Activated B cell treated with CpG ODN at 0.5 μM for 24 hours (primary cell): ENCODE measurements at regions of chr14 and their contacts with region 1.

Region 1: GRCh38 chr14:95196290-95196689 is 39.0 kb upstream of the DICER1 start:
- DNase-seq: no peak
- ATAC-seq: peak; percentile 56
- H3K4me3 Mint-ChIP-seq: no peak overlapping the region
- H3K27ac Mint-ChIP-seq: no peak overlapping the region
- H3K4me1 Mint-ChIP-seq: peaks cover 4% of the 10 kb centered on the region
- H3K27me3 Mint-ChIP-seq: no peaks in the 10 kb centered on the region
- CTCF ChIP-seq: no peak

Region 2: GRCh38 chr14:94689218-94689984 is 506.9 kb before region 1 on chr14:
- CTCF ChIA-PET with region 1: no interaction called
- POLR2A ChIA-PET with region 1: no interaction called
- intact Hi-C with region 1: loop called (anchors 5 kb)
- DNase-seq: peak; percentile 35
- ATAC-seq: peak; percentile 49
- H3K4me3 Mint-ChIP-seq: no peak overlapping the region
- H3K27ac Mint-ChIP-seq: no peak overlapping the region
- H3K4me1 Mint-ChIP-seq: no peaks in the 10 kb centered on the region
- H3K27me3 Mint-ChIP-seq: peaks cover 14% of the 10 kb centered on the region
- CTCF ChIP-seq: no peak

Region 3: DNA sequence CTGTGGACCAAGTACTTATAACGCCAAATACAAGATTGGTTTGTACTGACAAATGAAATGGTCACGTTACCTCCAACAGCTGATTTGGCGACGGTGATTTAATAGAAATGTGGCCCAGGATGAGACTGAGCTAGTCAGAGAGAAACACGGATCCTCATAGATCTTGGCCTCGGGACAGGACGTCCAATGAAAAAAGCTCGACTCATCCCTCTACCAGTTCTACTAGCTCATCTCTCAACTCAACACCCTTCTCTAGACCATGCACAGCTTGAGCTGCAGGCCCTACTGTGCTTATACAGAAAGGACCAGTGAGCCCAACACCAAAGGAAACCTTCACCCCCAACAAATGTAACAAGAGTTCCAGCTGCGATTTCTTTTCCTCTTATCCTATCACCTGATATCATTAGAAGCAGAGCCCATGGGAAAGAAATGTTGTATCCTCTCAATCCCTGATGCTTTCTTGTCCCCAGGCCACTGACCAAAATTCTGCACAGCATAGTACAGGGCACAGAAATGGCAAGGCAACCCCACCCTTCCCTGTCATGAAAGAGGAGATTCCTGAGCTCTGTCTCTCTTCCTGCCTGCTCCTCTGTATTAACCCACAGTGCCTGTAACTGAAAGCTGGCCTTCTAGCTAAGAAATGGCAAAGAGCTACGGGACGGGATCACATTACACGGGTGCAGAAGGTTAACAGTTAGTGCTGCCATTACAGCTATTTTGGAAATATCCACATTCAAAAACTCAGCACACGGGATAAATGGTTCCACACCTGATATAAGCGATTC is 78.2 kb before region 1 on chr14:
- CTCF ChIA-PET with region 1: interaction called, 4 read pairs
- POLR2A ChIA-PET with region 1: no interaction called
- intact Hi-C with region 1: loop called (anchors 5 kb)
- DNase-seq: no peak
- ATAC-seq: no peak
- H3K4me3 Mint-ChIP-seq: no peak overlapping the region
- H3K27ac Mint-ChIP-seq: no peak overlapping the region
- H3K4me1 Mint-ChIP-seq: no peaks in the 10 kb centered on the region
- H3K27me3 Mint-ChIP-seq: no peaks in the 10 kb centered on the region
- CTCF ChIP-seq: no peak

Region 4: GRCh38 chr14:95140060-95140858 is 56.0 kb before region 1 on chr14:
- CTCF ChIA-PET with region 1: no interaction called
- POLR2A ChIA-PET with region 1: no interaction called
- intact Hi-C with region 1: loop called (anchors 5 kb)
- DNase-seq: no peak
- ATAC-seq: peak; percentile 52
- H3K4me3 Mint-ChIP-seq: peak overlapping the region; percentile 64
- H3K27ac Mint-ChIP-seq: peak overlapping the region; percentile 78
- H3K4me1 Mint-ChIP-seq: peaks cover 79% of the 10 kb centered on the region
- H3K27me3 Mint-ChIP-seq: no peaks in the 10 kb centered on the region
- CTCF ChIP-seq: no peak

Region 5: GRCh38 chr14:95185033-95185766 is 11.1 kb before region 1 on chr14:
- CTCF ChIA-PET with region 1: no interaction called
- POLR2A ChIA-PET with region 1: no interaction called
- intact Hi-C with region 1: no loop called
- DNase-seq: no peak
- ATAC-seq: no peak
- H3K4me3 Mint-ChIP-seq: no peak overlapping the region
- H3K27ac Mint-ChIP-seq: no peak overlapping the region
- H3K4me1 Mint-ChIP-seq: peaks cover 5% of the 10 kb centered on the region
- H3K27me3 Mint-ChIP-seq: peaks cover 12% of the 10 kb centered on the region
- CTCF ChIP-seq: no peak